Head of caudate nucleus (tissue), 42 donors: ENCODE measurements at regions of chr16 and their contacts with region 1.

Region 1: DNA sequence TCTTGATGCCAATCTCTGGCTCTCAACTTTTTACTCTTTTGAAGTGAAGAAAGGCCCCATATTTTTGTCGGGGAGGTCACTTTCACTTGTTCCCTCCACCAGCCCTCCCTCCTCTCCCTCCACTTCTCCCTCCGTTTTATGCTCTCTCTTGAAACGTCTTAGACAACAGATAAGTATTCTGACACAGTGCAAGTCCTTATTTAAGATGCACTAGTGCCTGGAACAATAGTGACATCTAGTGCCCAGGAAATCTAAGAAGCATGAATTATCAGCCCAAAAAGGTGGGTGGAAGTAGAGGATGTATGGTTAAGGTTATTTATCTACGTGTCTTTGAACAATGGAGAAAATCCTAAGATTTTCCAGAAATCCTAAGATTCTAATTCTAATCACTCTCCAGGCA is 17.9 kb downstream of the PSME3IP1 start:
- DNase-seq: peak in 8 of 42 donors; percentile 40 to 76 (median 48)

Region 2: GRCh38 chr16:56866943-56867830 is 300.8 kb before region 1 on chr16:
- intact Hi-C with region 1: loop called (anchors 10 kb)
- DNase-seq: peak in 21 of 42 donors; percentile 25 to 81 (median 54)

Region 3: DNA sequence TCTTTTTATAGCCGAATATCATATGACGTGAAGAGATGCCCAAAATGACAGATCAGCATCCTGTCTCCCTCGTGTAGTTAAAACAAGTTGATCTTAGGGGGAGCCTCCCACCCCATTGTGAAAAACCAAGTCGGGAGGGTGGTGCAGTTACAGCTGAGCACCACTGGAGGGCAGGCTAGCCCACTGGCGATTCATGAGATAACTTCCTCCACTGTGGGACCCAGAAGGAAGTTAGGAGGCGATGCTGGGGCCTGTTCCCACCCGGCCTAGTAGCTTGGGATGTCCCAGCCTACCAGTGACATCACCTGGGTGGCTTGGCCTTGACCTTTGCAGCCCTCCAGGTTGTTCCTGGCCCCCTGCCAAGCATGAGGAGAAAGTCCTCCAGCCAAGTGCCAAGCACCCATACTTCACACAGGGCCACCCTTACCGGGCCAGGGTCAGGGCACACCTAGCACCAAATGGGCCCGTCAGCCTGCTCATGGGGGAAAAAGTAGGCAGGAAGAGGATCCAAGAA is 83.6 kb before region 1 on chr16:
- intact Hi-C with region 1: loop called (anchors 1 kb)
- DNase-seq: peak; percentile 52 to 92 (median 79)